K562 (cell line): ENCODE measurements at regions of chr1 and their contacts with region 1.

Region 1: GRCh38 chr1:42747125-42747524 is 7.1 kb upstream of the CLDN19 start:
- DNase-seq: peak; percentile 43 to 55 (median 52)
- ATAC-seq: peak; percentile 73
- H3K4me3 ChIP-seq: no peak overlapping the region
- H3K27ac ChIP-seq: no peak overlapping the region
- H3K4me1 ChIP-seq: no peaks in the 10 kb centered on the region
- H3K27me3 ChIP-seq: peaks cover 0 to 5% of the 10 kb centered on the region in 2 experiments; a peak in 1 of 5 replicates
- CTCF ChIP-seq: peak; percentile 70 to 82 (median 74)
- EP300 ChIP-seq: no peak
- POLR2A ChIP-seq: no peak
- RAD21 ChIP-seq: peak; percentile 52 to 76

Region 2: DNA sequence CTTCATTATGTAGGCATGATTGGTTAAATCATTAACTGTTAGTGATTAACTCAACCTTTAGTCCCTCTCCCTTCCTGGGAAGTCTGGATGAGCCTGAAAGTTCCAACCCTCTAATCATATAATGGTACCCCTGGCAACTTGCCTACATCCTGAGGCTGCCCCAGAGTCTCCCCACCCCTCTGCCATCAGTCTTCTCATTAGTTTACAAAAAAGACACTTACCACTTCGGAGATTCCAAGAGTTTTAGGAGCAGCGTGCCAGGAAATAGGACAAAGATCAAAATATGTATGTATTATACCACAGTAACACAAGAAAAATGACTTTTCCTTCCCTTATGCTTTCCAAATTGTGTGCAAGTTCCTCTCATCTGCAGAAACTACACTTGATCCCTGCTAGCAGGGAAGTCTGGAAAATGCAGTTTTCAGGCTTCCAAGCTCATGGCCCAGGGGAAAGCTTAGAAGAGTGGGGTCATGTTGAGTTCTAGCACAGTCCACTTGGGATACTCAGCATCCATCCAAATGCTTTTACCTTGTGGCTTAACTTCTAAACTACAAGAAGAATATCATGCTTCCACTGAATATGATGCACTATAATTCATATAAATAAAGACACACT is 153.5 kb before region 1 on chr1:
- CTCF ChIA-PET with region 1: no interaction called
- POLR2A ChIA-PET with region 1: no interaction called
- in situ Hi-C with region 1: loop called (anchors 25 kb)
- intact Hi-C with region 1: no loop called
- DNase-seq: no peak
- ATAC-seq: no peak
- H3K4me3 ChIP-seq: no peak overlapping the region
- H3K27ac ChIP-seq: no peak overlapping the region
- H3K4me1 ChIP-seq: no peaks in the 10 kb centered on the region
- H3K27me3 ChIP-seq: peaks cover 3 to 17% of the 10 kb centered on the region in 2 experiments; a peak in 4 of 5 replicates
- CTCF ChIP-seq: no peak
- EP300 ChIP-seq: no peak
- POLR2A ChIP-seq: no peak
- RAD21 ChIP-seq: no peak

Region 3: GRCh38 chr1:42736150-42736850 is 10.8 kb before region 1 on chr1:
- CTCF ChIA-PET with region 1: no interaction called
- POLR2A ChIA-PET with region 1: interaction called, 14 read pairs
- in situ Hi-C with region 1: no loop called
- intact Hi-C with region 1: no loop called
- DNase-seq: peak; percentile 69 to 81 (median 77)
- ATAC-seq: peak; percentile 90
- H3K4me3 ChIP-seq: no peak overlapping the region
- H3K27ac ChIP-seq: no peak overlapping the region
- H3K4me1 ChIP-seq: peaks cover 0 to 45% of the 10 kb centered on the region in 2 experiments; a peak in 3 of 5 replicates
- H3K27me3 ChIP-seq: peaks cover 7 to 49% of the 10 kb centered on the region in 2 experiments; a peak in 4 of 5 replicates
- CTCF ChIP-seq: peak; percentile 69 to 81 (median 73)
- EP300 ChIP-seq: no peak
- POLR2A ChIP-seq: no peak
- RAD21 ChIP-seq: peak in 1 of 2 experiments; percentile 59; a peak in 2 of 4 replicates

Region 4: GRCh38 chr1:42952303-42953001 is 205.3 kb after region 1 on chr1:
- CTCF ChIA-PET with region 1: no interaction called
- POLR2A ChIA-PET with region 1: no interaction called
- in situ Hi-C with region 1: no loop called
- intact Hi-C with region 1: no loop called
- DNase-seq: peak; percentile 61 to 91 (median 74)
- ATAC-seq: peak; percentile 83
- H3K4me3 ChIP-seq: no peak overlapping the region
- H3K27ac ChIP-seq: peak overlapping the region; percentile 64
- H3K4me1 ChIP-seq: peaks cover 67 to 79% of the 10 kb centered on the region in 2 experiments
- H3K27me3 ChIP-seq: no peaks in the 10 kb centered on the region
- CTCF ChIP-seq: no peak
- EP300 ChIP-seq: peak; percentile 87
- POLR2A ChIP-seq: no peak
- RAD21 ChIP-seq: peak in 1 of 2 experiments; percentile 33; a peak in 2 of 4 replicates